Activated CD4-positive, alpha-beta T cell treated with anti-CD3 and anti-CD28 coated beads for 36 hours (primary cell): ENCODE measurements at regions of chr9 and their contacts with region 1.

Region 1: GRCh38 chr9:98998441-98999151 is 54.9 kb downstream of the COL15A1 start:
- DNase-seq: peak; percentile 79
- ATAC-seq: peak; percentile 75
- H3K4me3 Mint-ChIP-seq: no peak overlapping the region
- H3K27ac Mint-ChIP-seq: no peak overlapping the region
- H3K4me1 Mint-ChIP-seq: peaks cover 19% of the 10 kb centered on the region
- H3K27me3 Mint-ChIP-seq: no peaks in the 10 kb centered on the region

Region 2: DNA sequence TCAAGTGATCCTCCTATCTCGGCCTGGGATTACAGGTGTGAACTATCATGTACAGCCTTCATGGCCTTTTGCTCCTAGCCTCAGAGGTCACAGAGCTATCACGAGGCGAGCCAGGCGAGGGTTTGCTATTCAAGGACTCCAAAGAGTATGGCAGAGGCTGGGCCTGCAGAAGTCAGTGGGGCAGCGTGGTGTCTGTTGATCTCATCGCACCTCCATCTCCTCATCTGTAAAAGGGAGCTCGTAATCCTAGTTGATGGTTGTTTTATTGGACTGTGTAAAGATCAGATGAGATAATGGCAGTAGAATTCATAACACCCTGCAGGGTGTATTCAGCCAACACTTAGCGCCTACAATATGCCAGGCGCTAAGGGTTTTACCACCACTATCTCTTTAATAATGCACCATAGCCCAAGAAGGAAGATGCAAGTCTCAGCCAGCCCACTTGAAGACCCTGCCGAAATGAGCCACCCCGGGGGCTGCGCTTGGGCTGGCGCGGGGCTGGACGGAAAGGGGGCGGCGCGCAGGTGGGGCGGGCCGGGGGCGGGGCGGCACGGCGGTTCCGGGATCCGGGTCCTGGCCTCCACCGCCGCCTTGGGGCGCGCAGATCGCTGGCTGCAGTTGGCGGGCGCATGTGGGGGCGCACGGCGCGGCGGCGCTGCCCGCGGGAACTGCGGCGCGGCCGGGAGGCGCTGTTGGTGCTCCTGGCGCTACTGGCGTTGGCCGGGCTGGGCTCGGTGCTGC is 191.4 kb before region 1 on chr9 and contains the start of gene GALNT12:
- CTCF ChIA-PET with region 1: interaction called, 8 read pairs
- POLR2A ChIA-PET with region 1: no interaction called
- intact Hi-C with region 1: loop called in 1 of 2 experiments (anchors 1 kb)
- DNase-seq: peak; percentile 74
- ATAC-seq: peak; percentile 63
- H3K4me3 Mint-ChIP-seq: peak within 1 kb of the TSS; percentile 81
- H3K27ac Mint-ChIP-seq: peak within 1 kb of the TSS; percentile 65
- H3K4me1 Mint-ChIP-seq: peaks cover 35% of the 10 kb centered on the region
- H3K27me3 Mint-ChIP-seq: peaks cover 3% of the 10 kb centered on the region
- total RNA-seq, gene GALNT12: 10.2 to 12.7 TPM

Region 3: GRCh38 chr9:98929866-98930265 is 68.7 kb before region 1 on chr9:
- CTCF ChIA-PET with region 1: no interaction called
- POLR2A ChIA-PET with region 1: no interaction called
- intact Hi-C with region 1: loop called in 1 of 2 experiments (anchors 10 kb)
- DNase-seq: no peak
- ATAC-seq: no peak
- H3K4me3 Mint-ChIP-seq: no peak overlapping the region
- H3K27ac Mint-ChIP-seq: no peak overlapping the region
- H3K4me1 Mint-ChIP-seq: no peaks in the 10 kb centered on the region
- H3K27me3 Mint-ChIP-seq: peaks cover 8% of the 10 kb centered on the region

Region 4: GRCh38 chr9:98974994-98975712 is 23.4 kb before region 1 on chr9:
- CTCF ChIA-PET with region 1: interaction called, 12 read pairs
- POLR2A ChIA-PET with region 1: no interaction called
- intact Hi-C with region 1: loop called (anchors 1 to 2 kb)
- DNase-seq: peak; percentile 89
- ATAC-seq: peak; percentile 99
- H3K4me3 Mint-ChIP-seq: no peak overlapping the region
- H3K27ac Mint-ChIP-seq: no peak overlapping the region
- H3K4me1 Mint-ChIP-seq: peaks cover 5% of the 10 kb centered on the region
- H3K27me3 Mint-ChIP-seq: peaks cover 15% of the 10 kb centered on the region

Region 5: GRCh38 chr9:99012942-99013512 is 14.4 kb after region 1 on chr9:
- CTCF ChIA-PET with region 1: interaction called, 33 read pairs
- POLR2A ChIA-PET with region 1: no interaction called
- intact Hi-C with region 1: no loop called
- DNase-seq: peak; percentile 32
- ATAC-seq: peak; percentile 90
- H3K4me3 Mint-ChIP-seq: no peak overlapping the region
- H3K27ac Mint-ChIP-seq: peak overlapping the region; percentile 86
- H3K4me1 Mint-ChIP-seq: peaks cover 20% of the 10 kb centered on the region
- H3K27me3 Mint-ChIP-seq: no peaks in the 10 kb centered on the region

Region 6: GRCh38 chr9:99076483-99077171 is 78.0 kb after region 1 on chr9:
- CTCF ChIA-PET with region 1: no interaction called
- POLR2A ChIA-PET with region 1: no interaction called
- intact Hi-C with region 1: no loop called
- DNase-seq: peak; percentile 39
- ATAC-seq: peak; percentile 52
- H3K4me3 Mint-ChIP-seq: no peak overlapping the region
- H3K27ac Mint-ChIP-seq: peak overlapping the region; percentile 73
- H3K4me1 Mint-ChIP-seq: peaks cover 20% of the 10 kb centered on the region
- H3K27me3 Mint-ChIP-seq: no peaks in the 10 kb centered on the region